Colonic mucosa (tissue), 4 donors: ENCODE measurements at regions of chrX and their contacts with region 1.

Region 1: GRCh38 chrX:150772150-150772970 is 79.2 kb downstream of the MTMR1 start:
- DNase-seq: peak; percentile 83
- H3K4me3 ChIP-seq: no peak overlapping the region
- H3K27ac ChIP-seq: no peak overlapping the region
- H3K4me1 ChIP-seq: no peaks in the 10 kb centered on the region
- H3K27me3 ChIP-seq: no peaks in the 10 kb centered on the region
- CTCF ChIP-seq: peak; percentile 67

Region 2: GRCh38 chrX:151004082-151004481 is 231.7 kb after region 1 on chrX:
- intact Hi-C with region 1: loop called (anchors 5 kb)
- DNase-seq: no peak
- H3K4me3 ChIP-seq: no peak overlapping the region
- H3K27ac ChIP-seq: no peak overlapping the region
- H3K4me1 ChIP-seq: no peaks in the 10 kb centered on the region
- H3K27me3 ChIP-seq: no peaks in the 10 kb centered on the region
- CTCF ChIP-seq: no peak

Region 3: DNA sequence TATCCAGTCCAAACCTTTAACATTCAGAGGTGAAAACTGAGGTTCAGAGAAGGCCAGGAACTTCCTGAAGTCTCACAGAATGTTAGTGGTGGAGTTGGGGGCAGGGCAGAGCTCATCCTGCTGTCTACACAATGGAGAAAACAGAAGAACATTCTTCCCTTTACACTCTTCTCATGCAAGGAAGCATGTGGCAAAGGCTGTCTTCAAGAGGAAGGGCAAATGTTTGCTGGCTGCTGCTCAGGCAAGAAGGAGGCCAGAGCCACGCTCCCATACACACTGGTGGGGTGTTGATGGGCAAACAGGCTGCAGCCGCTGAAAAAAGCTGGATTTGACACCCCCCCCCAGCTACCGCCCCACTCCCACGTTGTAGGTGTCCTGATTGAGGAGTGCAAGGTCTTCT is 243.3 kb after region 1 on chrX:
- intact Hi-C with region 1: no loop called
- DNase-seq: no peak
- H3K4me3 ChIP-seq: no peak overlapping the region
- H3K27ac ChIP-seq: no peak overlapping the region
- H3K4me1 ChIP-seq: no peaks in the 10 kb centered on the region
- H3K27me3 ChIP-seq: no peaks in the 10 kb centered on the region
- CTCF ChIP-seq: no peak

Region 4: DNA sequence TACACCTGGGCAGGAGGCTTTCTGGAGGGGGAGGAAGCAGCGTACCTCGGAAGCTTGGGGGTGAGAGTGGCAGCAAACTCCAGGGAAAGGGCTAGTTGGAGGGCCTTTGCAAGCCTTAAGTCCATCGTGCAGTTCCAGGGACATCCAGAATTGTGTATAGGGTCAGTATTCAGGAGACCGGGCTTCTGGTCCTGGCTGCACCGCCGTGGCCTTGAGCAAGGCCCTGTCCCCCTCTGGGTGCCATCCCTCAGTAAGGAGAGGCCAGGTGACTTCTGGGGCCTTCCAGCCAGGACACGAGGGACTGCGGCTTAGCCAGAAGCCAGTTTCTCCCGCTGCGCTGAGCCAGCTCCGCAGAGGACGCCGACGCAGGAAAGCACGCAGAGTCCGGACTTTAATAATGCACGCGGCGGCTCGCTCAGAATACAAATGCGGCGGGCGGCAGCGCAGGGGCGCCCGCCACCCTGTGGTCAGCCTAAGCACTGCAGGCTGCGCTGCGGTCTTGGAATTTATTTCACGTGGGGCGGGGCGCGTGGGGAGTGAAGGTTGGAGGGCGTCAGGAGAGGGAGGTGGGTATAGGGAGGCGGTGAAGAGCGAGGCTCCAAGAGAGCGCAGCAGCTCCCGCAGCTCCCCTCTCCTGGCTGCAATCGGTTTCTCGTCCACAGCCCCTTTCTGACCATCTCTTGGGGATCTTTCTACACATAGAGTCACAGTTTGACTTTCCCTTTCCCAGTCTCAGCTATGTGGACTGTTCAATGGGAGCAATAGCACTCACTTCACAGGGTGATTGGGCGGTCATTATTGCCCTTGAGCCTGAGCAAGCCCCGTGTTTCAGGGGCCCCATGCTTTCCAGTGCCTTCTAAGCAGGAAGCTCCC is 310.0 kb after region 1 on chrX:
- intact Hi-C with region 1: loop called (anchors 1 kb)
- DNase-seq: peak; percentile 46
- H3K4me3 ChIP-seq: no peak overlapping the region
- H3K27ac ChIP-seq: no peak overlapping the region
- H3K4me1 ChIP-seq: peaks cover 3% of the 10 kb centered on the region
- H3K27me3 ChIP-seq: no peaks in the 10 kb centered on the region
- CTCF ChIP-seq: peak; percentile 86